Dorsolateral prefrontal cortex (tissue), 120 donors: ENCODE measurements at regions of chr7 and their contacts with region 1.

Region 1: DNA sequence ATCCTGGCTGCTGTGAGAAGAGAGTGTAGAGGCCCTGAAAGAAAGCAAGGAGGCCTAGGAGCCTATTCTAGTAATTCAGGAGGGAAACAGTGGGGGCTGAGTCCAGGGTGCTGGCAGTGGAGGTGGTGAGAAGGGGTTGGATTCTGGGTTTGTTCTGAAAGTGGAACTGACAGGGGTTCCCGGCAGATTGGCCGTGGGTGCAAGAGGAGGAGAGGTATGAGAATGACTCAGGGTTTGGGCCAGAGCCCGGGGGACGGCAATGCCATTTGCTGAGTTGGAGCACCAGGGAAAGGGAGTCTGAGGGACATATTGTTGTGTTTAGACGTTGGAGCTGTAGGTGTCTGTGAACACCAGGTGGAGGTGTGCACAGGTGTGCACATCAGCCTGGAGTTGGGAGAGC is 38.5 kb downstream of the NPTX2 start:
- DNase-seq: peak; percentile 14 to 89 (median 74)
- H3K4me3 ChIP-seq: no peak overlapping the region
- H3K27ac ChIP-seq: no peak overlapping the region
- H3K27me3 ChIP-seq: no peaks in the 10 kb centered on the region
- CTCF ChIP-seq: no peak

Region 2: DNA sequence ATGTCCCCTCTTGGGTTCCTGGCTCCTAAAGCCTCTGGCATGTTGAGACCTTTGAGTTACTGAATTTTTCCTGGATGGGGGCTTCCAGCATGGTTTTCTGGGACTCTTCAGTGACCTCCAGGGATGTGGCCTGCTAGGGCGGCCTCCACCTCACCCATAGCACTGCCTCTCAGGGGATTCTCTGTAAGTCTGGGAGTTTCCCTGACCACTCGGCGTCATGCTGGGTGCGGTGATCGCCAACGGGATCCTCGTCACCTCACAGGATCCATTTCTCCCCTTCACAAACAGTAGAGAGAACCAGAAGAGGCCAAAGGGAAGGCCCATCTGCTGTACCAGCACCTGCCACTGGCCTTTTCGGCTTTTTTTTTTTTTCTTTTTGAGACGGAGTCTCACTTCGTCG is 45.8 kb after region 1 on chr7:
- intact Hi-C with region 1: no loop called
- DNase-seq: no peak
- H3K4me3 ChIP-seq: no peak overlapping the region
- H3K27ac ChIP-seq: no peak overlapping the region
- H3K27me3 ChIP-seq: peaks cover 0 to 22% (median 3%) of the 10 kb centered on the region in 45 donors
- CTCF ChIP-seq: no peak

Region 3: DNA sequence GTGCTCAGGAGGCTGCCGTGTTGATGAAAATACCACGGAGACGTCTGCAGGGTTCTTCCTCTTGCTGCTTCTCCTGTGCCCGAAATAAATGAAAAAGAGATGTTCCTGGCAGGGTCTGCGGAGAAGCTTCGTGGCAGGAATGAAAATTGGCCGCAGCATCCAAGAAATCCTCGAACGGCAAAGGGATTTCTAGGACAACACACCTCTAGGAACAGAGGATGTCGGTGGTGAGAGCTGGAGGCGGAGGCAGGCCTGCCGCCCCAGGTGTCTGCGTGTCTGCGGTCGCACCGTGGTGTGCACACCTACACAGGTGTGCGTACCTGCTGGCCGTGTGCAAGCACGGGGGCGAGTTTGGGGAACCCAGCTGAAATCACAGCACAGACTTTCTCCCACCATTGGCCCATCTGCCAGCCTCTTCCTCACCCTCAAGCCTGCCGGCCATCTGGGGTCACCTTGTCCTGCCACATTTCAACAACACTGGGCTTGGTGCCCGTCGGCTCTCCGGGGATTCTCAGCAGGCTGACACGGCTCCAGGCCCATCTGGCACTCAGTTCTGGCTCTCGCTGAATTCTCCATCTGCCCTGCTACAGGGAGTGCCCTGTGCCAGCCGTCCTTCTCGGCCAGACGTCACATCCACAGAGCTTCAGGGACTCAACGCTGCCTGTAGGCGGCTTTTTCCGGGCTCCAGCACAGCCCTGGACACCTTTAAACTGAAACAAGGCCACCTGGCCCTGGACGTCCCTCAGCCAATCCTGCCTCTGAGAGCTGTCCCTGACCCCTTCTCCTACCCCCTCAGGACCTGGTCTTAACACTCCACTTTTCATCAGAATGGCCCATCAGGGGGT is 171.0 kb after region 1 on chr7:
- intact Hi-C with region 1: loop called in 1 of 2 experiments (anchors 10 kb)
- DNase-seq: peak; percentile 49 to 97 (median 78)
- H3K4me3 ChIP-seq: peak overlapping the region in 3 of 59 donors; percentile 9 to 23 (median 12)
- H3K27ac ChIP-seq: peak overlapping the region in 2 of 59 donors; percentile 21 to 46
- H3K27me3 ChIP-seq: no peaks in the 10 kb centered on the region
- CTCF ChIP-seq: peak in 10 of 56 donors; percentile 8 to 21 (median 11)